B cell (primary cell): ENCODE measurements at regions of chr10 and their contacts with region 1.

Region 1: GRCh38 chr10:74771054-74771453 is 55.3 kb upstream of the KAT6B start:
- DNase-seq: no peak
- ATAC-seq: no peak
- H3K4me3 ChIP-seq: no peak overlapping the region
- H3K4me3 Mint-ChIP-seq: no peak overlapping the region
- H3K27ac ChIP-seq: no peak overlapping the region
- H3K27ac Mint-ChIP-seq: no peak overlapping the region
- H3K4me1 ChIP-seq: no peaks in the 10 kb centered on the region
- H3K4me1 Mint-ChIP-seq: peaks cover 5% of the 10 kb centered on the region
- H3K27me3 ChIP-seq: no peaks in the 10 kb centered on the region
- H3K27me3 Mint-ChIP-seq: no peaks in the 10 kb centered on the region
- CTCF ChIP-seq: no peak

Region 2: DNA sequence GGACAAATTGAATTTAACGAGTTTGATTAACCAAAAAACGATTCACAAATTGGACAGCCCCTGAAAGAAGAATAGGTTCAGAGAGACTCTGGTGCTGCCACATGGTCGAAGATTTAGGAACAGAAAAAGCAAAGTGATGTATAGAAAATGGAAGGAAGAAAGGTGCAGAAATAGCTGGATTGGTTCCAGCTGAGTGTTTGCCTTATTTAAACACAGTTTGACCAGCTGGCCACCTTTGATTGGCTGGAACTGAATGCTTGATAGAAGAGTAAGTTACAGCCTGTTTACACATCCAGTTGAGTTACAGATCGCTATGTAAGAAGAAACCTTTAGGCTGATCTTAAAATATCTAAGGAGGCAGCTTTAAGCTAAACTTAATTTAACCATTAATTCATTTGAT is 15.0 kb after region 1 on chr10:
- CTCF ChIA-PET with region 1: interaction called, 3 read pairs
- POLR2A ChIA-PET with region 1: no interaction called
- intact Hi-C with region 1: loop called (anchors 1 kb)
- DNase-seq: no peak
- ATAC-seq: no peak
- H3K4me3 ChIP-seq: no peak overlapping the region
- H3K4me3 Mint-ChIP-seq: no peak overlapping the region
- H3K27ac ChIP-seq: no peak overlapping the region
- H3K27ac Mint-ChIP-seq: no peak overlapping the region
- H3K4me1 ChIP-seq: no peaks in the 10 kb centered on the region
- H3K4me1 Mint-ChIP-seq: no peaks in the 10 kb centered on the region
- H3K27me3 ChIP-seq: no peaks in the 10 kb centered on the region
- H3K27me3 Mint-ChIP-seq: no peaks in the 10 kb centered on the region
- CTCF ChIP-seq: no peak